Activated CD4-positive, alpha-beta T cell treated with anti-CD3 and anti-CD28 coated beads, Interleukin-2, amount 10 ng/mL, durations not matched to agents 24 days and 14 days (primary cell): ENCODE measurements at regions of chr2 and their contacts with region 1.

Region 1: DNA sequence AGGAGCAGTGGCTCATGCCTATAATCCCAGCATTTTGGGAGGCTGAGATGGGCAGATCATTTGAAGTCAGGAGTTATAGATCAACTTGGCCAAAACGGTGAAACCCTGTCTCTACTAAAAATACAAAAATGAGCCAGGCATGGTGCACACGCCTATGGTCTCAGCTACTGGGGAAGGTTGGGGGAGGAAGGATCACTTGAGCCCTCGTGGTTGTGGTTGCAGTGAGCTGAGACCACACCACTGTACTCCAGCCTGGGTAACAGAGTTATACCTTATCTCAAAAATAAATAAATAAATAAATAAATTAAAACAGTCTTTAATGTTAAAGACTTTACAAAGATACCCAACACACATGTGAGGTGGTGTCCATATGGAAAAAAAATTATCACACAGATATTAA is 134.0 kb downstream of the C2orf74 start:
- DNase-seq: no peak
- H3K4me3 Mint-ChIP-seq: no peak overlapping the region
- H3K27ac Mint-ChIP-seq: no peak overlapping the region
- H3K4me1 Mint-ChIP-seq: peaks cover 7% of the 10 kb centered on the region
- H3K27me3 Mint-ChIP-seq: no peaks in the 10 kb centered on the region

Region 2: GRCh38 chr2:61220768-61221167 is 75.2 kb before region 1 on chr2:
- intact Hi-C with region 1: loop called (anchors 10 kb)
- DNase-seq: no peak
- H3K4me3 Mint-ChIP-seq: no peak overlapping the region
- H3K27ac Mint-ChIP-seq: no peak overlapping the region
- H3K4me1 Mint-ChIP-seq: no peaks in the 10 kb centered on the region
- H3K27me3 Mint-ChIP-seq: no peaks in the 10 kb centered on the region